Natural killer cell (primary cell): ENCODE measurements at regions of chr15 and their contacts with region 1.

Region 1: DNA sequence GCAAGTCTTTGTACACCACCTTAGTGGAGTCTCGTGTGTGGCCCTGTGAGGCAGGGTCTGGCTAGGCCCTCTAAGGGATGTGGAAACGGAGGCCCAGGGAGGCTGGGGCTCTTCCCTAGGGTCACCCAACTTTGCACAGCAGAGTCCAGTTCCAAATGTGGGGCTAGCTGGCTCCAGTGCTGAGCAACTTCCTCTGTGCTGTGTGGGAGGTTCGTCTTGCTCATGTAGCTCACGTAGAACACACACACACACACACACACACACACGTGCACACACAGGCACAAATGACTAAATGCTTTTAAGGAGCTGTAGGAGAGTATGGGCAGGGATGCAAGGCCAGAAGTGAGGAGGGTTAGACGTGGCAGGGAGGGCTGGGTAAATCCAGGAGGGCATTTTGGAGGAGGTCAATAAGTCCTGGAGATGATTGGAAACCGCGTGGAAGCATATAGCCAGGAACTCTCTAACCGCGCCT is 213.8 kb downstream of the RPLP1 start:
- DNase-seq: peak in 1 of 2 donors; percentile 51
- ATAC-seq: peak in 1 of 3 donors; percentile 31
- H3K4me3 ChIP-seq: no peak overlapping the region
- H3K4me3 Mint-ChIP-seq: no peak overlapping the region
- H3K27ac ChIP-seq: peak overlapping the region; percentile 8
- H3K27ac Mint-ChIP-seq: peak overlapping the region in 1 of 2 donors; percentile 78
- H3K4me1 ChIP-seq: peaks cover 76% of the 10 kb centered on the region
- H3K4me1 Mint-ChIP-seq: peaks cover 57 to 63% of the 10 kb centered on the region in 2 donors
- H3K27me3 ChIP-seq: no peaks in the 10 kb centered on the region
- H3K27me3 Mint-ChIP-seq: peaks cover 15 to 28% of the 10 kb centered on the region in 2 donors
- CTCF ChIP-seq: no peak

Region 2: GRCh38 chr15:69719527-69720240 is 53.2 kb after region 1 on chr15:
- intact Hi-C with region 1: loop called (anchors 2 kb)
- DNase-seq: peak; percentile 69 to 89
- ATAC-seq: peak; percentile 79 to 94 (median 92)
- H3K4me3 ChIP-seq: no peak overlapping the region
- H3K4me3 Mint-ChIP-seq: peak overlapping the region; percentile 59
- H3K27ac ChIP-seq: peak overlapping the region; percentile 90
- H3K27ac Mint-ChIP-seq: peak overlapping the region; percentile 74 to 85
- H3K4me1 ChIP-seq: peaks cover 82% of the 10 kb centered on the region
- H3K4me1 Mint-ChIP-seq: peaks cover 85 to 93% of the 10 kb centered on the region in 2 donors
- H3K27me3 ChIP-seq: no peaks in the 10 kb centered on the region
- H3K27me3 Mint-ChIP-seq: peaks cover 6% of the 10 kb centered on the region in 2 donors
- CTCF ChIP-seq: no peak